A549 (cell line): ENCODE measurements at regions of chr14 and their contacts with region 1.

Region 1: GRCh38 chr14:51094901-51095853 is at the start of gene TRIM9:
- DNase-seq: peak; percentile 96 to 99
- ATAC-seq: peak; percentile 87 to 92
- H3K4me3 ChIP-seq: peak within 1 kb of the TSS; percentile 76
- H3K27ac ChIP-seq: peak within 1 kb of the TSS; percentile 88 to 90
- H3K4me1 ChIP-seq: peaks cover 44% of the 10 kb centered on the region
- CTCF ChIP-seq: no peak
- EP300 ChIP-seq: no peak
- POLR2A ChIP-seq: peak; percentile 69
- RAD21 ChIP-seq: no peak
- polyA plus RNA-seq, gene TRIM9: 21.2 and 24.6 TPM in 2 replicates

Region 2: GRCh38 chr14:50943943-50944646 is 151.1 kb before region 1 on chr14 and contains the start of gene PYGL:
- CTCF ChIA-PET with region 1: no interaction called
- POLR2A ChIA-PET with region 1: interaction called, 13 read pairs
- DNase-seq: peak; percentile 65 to 77
- ATAC-seq: peak; percentile 91 to 92
- H3K4me3 ChIP-seq: peak within 1 kb of the TSS; percentile 90
- H3K27ac ChIP-seq: peak within 1 kb of the TSS; percentile 85 to 95
- H3K4me1 ChIP-seq: peaks cover 13% of the 10 kb centered on the region
- CTCF ChIP-seq: no peak
- EP300 ChIP-seq: no peak
- POLR2A ChIP-seq: peak; percentile 87
- RAD21 ChIP-seq: no peak
- polyA plus RNA-seq, gene PYGL: 119 and 122 TPM in 2 replicates

Region 3: GRCh38 chr14:50954811-50955372 is 140.3 kb before region 1 on chr14:
- CTCF ChIA-PET with region 1: interaction called, 8 read pairs
- POLR2A ChIA-PET with region 1: interaction called, 33 read pairs
- DNase-seq: peak; percentile 61 to 79
- ATAC-seq: peak; percentile 73 to 79; a peak in 5 of 6 replicates
- H3K4me3 ChIP-seq: peak overlapping the region; percentile 9; the same call in 1 of the 3 replicates
- H3K27ac ChIP-seq: peak overlapping the region; percentile 89 to 92
- H3K4me1 ChIP-seq: peaks cover 20% of the 10 kb centered on the region
- CTCF ChIP-seq: peak; percentile 76
- EP300 ChIP-seq: no peak
- POLR2A ChIP-seq: no peak
- RAD21 ChIP-seq: peak; percentile 80 to 83

Region 4: GRCh38 chr14:51006781-51007211 is 88.4 kb before region 1 on chr14:
- CTCF ChIA-PET with region 1: interaction called, 7 read pairs
- POLR2A ChIA-PET with region 1: interaction called, 27 read pairs
- DNase-seq: peak; percentile 21 to 57
- ATAC-seq: peak; percentile 46 to 69; a peak in 4 of 6 replicates
- H3K4me3 ChIP-seq: 0 out of 3 replicates have a peak overlapping the region, but pooled peaks have one; percentile 10
- H3K27ac ChIP-seq: peak overlapping the region; percentile 93 to 98
- H3K4me1 ChIP-seq: peaks cover 50% of the 10 kb centered on the region
- CTCF ChIP-seq: no peak
- EP300 ChIP-seq: peak in 1 of 2 experiments; percentile 23; a peak in 1 of 5 replicates
- POLR2A ChIP-seq: no peak
- RAD21 ChIP-seq: peak in 1 of 2 experiments; percentile 27; a peak in 1 of 5 replicates

Region 5: GRCh38 chr14:51082349-51082748 is 12.8 kb before region 1 on chr14:
- CTCF ChIA-PET with region 1: interaction called, 16 read pairs
- POLR2A ChIA-PET with region 1: interaction called, 6 read pairs
- DNase-seq: no peak
- ATAC-seq: no peak
- H3K4me3 ChIP-seq: no peak overlapping the region
- H3K27ac ChIP-seq: no peak overlapping the region
- H3K4me1 ChIP-seq: peaks cover 54% of the 10 kb centered on the region
- CTCF ChIP-seq: no peak
- EP300 ChIP-seq: no peak
- POLR2A ChIP-seq: no peak
- RAD21 ChIP-seq: no peak

Region 6: GRCh38 chr14:51219473-51220448 is 124.6 kb after region 1 on chr14:
- CTCF ChIA-PET with region 1: interaction called, 16 read pairs
- POLR2A ChIA-PET with region 1: interaction called, 7 read pairs
- DNase-seq: peak; percentile 10 to 50
- ATAC-seq: no peak
- H3K4me3 ChIP-seq: no peak overlapping the region
- H3K27ac ChIP-seq: 0 out of 6 replicates have a peak overlapping the region, but pooled peaks of 1 of the 2 experiments have one; percentile 0
- H3K4me1 ChIP-seq: no peaks in the 10 kb centered on the region
- CTCF ChIP-seq: peak; percentile 83
- EP300 ChIP-seq: no peak
- POLR2A ChIP-seq: no peak
- RAD21 ChIP-seq: peak; percentile 76 to 82

Region 7: DNA sequence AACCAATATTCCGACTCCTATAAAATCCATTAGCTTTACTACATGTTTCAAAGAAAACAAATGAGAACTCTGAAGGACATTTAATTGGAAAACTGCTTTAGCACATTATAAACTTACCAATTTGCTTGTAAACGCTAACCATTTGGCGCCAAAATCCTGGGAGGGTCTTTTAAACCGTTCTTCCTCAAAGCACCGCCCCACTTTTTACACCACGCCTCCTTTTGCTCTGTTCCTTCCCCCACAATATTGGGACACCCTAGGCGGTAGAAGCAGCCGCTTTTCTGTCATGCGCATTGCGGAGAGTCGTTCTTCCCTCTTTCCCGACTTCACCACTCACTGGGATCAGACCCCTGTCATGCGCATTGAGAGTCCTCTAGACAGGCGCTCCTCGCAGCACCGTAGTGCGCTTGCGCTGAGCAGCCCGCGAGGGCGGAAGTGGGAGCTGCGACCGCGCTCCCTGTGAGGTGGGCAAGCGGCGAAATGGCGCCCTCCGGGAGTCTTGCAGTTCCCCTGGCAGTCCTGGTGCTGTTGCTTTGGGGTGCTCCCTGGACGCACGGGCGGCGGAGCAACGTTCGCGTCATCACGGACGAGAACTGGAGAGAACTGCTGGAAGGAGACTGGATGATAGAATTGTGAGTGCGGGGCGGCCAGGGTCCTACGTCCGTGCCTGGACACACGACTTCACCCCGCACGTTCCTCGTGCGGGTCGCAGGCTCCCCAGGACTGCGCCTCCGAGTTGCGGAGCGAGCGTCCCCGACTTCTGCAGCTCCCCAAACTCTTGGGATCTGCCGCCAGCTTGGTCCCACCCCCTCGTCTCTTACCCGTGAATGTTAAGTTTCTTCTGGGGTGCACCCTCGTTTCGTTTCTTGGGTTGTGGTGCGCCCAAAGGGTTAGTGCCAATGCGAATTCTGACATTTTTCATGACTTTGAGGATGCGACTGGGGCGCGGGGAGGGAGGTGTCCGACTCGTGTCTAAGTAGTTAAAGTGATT is 144.9 kb after region 1 on chr14 and contains the start of gene TMX1:
- CTCF ChIA-PET with region 1: no interaction called
- POLR2A ChIA-PET with region 1: interaction called, 14 read pairs
- DNase-seq: peak; percentile 99 to 100
- ATAC-seq: peak; percentile 97 to 98
- H3K4me3 ChIP-seq: peak within 1 kb of the TSS; percentile 95
- H3K27ac ChIP-seq: peak within 1 kb of the TSS; percentile 94
- H3K4me1 ChIP-seq: peaks cover 24% of the 10 kb centered on the region; the same call in 2 of the 3 replicates
- CTCF ChIP-seq: no peak
- EP300 ChIP-seq: no peak
- POLR2A ChIP-seq: peak; percentile 98
- RAD21 ChIP-seq: no peak
- polyA plus RNA-seq, gene TMX1: 39.6 and 58.6 TPM in 2 replicates

Region 8: DNA sequence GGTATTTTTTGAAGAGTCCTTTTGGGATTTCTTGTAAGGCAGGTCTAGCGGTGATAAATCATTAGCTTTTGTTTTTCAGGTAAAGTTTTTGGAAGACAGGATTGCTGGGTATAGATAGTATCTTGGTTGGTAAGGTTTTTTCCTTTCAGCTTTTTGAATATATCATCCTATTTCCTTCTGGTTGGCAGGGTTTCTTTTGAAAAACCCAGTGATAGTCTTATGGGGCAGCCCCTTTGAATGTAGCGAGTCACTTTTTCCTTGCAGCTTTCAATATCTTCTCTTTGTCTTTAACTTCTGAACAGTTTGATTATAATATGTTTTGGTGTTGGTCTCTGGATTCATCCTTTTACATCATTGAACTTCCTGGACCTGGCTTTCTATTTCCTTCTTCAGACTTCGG is 165.0 kb after region 1 on chr14:
- CTCF ChIA-PET with region 1: no interaction called
- POLR2A ChIA-PET with region 1: no interaction called
- DNase-seq: no peak
- ATAC-seq: no peak
- H3K4me3 ChIP-seq: no peak overlapping the region
- H3K27ac ChIP-seq: no peak overlapping the region
- H3K4me1 ChIP-seq: no peaks in the 10 kb centered on the region
- CTCF ChIP-seq: no peak
- EP300 ChIP-seq: no peak
- POLR2A ChIP-seq: no peak
- RAD21 ChIP-seq: no peak

Region 9: GRCh38 chr14:51395361-51395849 is 300.2 kb after region 1 on chr14:
- CTCF ChIA-PET with region 1: no interaction called
- POLR2A ChIA-PET with region 1: no interaction called
- DNase-seq: peak in 1 of 2 experiments; percentile 22
- ATAC-seq: peak in 1 of 2 experiments; percentile 4; a peak in 2 of 6 replicates
- H3K4me3 ChIP-seq: no peak overlapping the region
- H3K27ac ChIP-seq: peak overlapping the region; percentile 84 to 88
- H3K4me1 ChIP-seq: peaks cover 53% of the 10 kb centered on the region
- CTCF ChIP-seq: no peak
- EP300 ChIP-seq: no peak
- POLR2A ChIP-seq: no peak
- RAD21 ChIP-seq: no peak